PC-9 (cell line): ENCODE measurements at regions of chr10 and their contacts with region 1.

Region 1: DNA sequence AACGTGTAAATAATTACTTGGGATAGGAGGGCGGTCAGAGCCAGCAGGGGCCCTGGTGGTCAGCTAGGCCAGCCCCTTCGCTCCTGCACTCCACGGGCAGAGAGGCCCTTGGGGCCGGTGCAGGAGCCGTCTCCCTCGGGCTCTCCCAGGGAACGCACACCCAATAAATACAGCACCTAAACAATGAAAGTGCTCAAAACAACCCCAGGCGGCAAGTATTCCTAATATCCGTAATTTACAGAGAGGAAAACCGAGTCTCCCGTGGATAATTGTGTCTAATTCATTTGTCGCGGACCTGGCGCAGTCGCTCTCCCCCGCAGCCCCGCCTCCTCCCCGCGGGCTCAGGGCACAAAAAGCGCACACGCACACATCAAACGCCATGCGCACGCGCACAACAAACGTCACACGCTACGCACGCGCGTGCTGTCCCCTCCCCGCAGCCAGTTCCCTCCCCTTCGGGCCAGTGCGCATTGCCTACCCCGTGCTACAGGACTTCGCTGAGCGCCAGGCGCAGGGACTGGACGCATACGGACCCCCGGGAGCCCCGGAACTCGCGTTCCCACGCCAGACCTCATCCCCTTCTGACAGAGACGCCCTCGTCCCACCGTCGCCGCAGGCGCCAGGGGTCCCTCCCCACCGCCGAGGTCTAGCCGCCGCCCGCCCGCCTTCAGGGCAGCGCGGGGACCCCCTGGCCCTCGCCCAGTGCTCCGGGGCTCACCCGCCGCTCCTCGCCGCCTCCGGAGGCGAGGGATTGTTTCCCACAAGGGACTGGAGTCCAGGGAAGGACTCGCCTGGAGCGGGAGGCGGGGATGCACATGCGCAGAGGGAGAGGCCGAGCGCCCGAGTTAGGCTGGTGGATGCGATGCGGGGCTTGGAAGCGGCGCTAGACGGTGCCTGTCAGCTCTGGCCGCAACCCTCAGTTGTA is at the start of gene ZNF248:
- DNase-seq: peak; percentile 83 to 91
- H3K4me3 ChIP-seq: peak within 1 kb of the TSS; percentile 94
- H3K27ac ChIP-seq: peak within 1 kb of the TSS; percentile 92
- H3K4me1 ChIP-seq: peaks cover 27% of the 10 kb centered on the region
- H3K27me3 ChIP-seq: no peaks in the 10 kb centered on the region
- CTCF ChIP-seq: no peak
- total RNA-seq, gene ZNF248: 10.7 and 15.1 TPM in 2 replicates

Region 2: DNA sequence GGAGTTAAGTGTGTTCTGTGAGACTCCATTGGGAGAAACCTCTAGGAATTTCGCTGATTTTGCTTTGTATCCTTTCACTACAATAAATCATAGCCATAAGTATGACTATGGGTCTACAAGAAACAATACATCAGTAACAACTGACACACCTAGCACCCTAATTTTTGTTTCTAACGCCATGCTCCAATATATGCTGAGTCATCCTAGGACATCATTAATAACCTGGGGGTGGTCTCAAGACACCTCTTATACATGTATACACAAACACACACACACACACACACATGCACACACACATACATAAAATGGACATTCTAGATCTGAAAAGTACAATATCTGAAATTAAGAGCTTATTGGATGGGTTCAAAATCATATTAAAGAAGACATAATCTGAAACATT is 18.3 kb before region 1 on chr10:
- CTCF ChIA-PET with region 1: interaction called, 6 read pairs
- POLR2A ChIA-PET with region 1: interaction called, 15 read pairs
- intact Hi-C with region 1: no loop called
- DNase-seq: no peak
- H3K4me3 ChIP-seq: no peak overlapping the region
- H3K27ac ChIP-seq: no peak overlapping the region
- H3K4me1 ChIP-seq: no peaks in the 10 kb centered on the region
- H3K27me3 ChIP-seq: no peaks in the 10 kb centered on the region
- CTCF ChIP-seq: no peak

Region 3: DNA sequence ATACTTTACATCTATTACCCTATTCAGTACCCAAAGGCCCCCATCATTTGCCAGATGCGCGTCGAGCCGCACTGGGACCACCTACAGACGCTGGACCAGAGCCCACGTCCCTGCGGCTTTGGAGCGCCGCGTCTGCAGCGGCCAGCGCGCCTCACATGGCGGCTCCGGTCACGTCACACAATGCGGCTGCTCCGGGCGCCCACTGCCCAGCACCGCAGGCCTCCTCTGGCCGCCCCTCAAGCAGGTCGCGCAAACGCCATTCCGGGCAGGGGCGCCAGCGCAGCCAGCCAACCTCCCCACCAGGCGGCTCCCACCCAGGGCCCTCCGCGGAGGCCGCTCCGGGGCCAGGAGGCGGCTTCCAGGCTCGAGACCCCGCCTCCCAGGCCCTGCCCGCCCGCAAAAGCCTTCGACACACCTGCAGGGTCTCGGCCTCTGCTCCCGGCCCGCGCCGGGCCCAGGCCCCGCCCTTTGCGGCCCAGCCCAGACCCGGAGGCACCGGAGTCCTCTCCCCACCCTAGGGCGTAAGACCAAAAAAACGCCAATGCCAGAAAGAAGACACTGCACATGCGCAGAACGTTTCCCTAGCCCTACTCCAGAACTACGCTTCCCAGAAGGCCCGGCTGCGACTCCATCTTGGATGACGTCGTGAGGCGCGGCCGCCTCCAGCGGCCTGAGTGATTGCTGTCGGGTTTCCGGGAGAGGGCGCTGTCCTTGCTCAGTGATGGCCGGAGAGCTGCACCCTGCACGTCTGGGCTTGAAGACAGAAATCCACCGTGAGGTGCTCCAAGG is 118.7 kb after region 1 on chr10 and contains the start of gene ZNF25:
- CTCF ChIA-PET with region 1: no interaction called
- POLR2A ChIA-PET with region 1: no interaction called
- intact Hi-C with region 1: loop called (anchors 5 kb)
- DNase-seq: peak; percentile 93 to 96
- H3K4me3 ChIP-seq: peak within 1 kb of the TSS; percentile 67
- H3K27ac ChIP-seq: 0 out of 2 replicates have a peak within 1 kb of the TSS, but pooled peaks have one; percentile 31
- H3K4me1 ChIP-seq: no peaks in the 10 kb centered on the region; the same call in 1 of the 2 replicates
- H3K27me3 ChIP-seq: no peaks in the 10 kb centered on the region
- CTCF ChIP-seq: peak; percentile 80
- total RNA-seq, gene ZNF25: 2.6 and 2.7 TPM in 2 replicates

Region 4: DNA sequence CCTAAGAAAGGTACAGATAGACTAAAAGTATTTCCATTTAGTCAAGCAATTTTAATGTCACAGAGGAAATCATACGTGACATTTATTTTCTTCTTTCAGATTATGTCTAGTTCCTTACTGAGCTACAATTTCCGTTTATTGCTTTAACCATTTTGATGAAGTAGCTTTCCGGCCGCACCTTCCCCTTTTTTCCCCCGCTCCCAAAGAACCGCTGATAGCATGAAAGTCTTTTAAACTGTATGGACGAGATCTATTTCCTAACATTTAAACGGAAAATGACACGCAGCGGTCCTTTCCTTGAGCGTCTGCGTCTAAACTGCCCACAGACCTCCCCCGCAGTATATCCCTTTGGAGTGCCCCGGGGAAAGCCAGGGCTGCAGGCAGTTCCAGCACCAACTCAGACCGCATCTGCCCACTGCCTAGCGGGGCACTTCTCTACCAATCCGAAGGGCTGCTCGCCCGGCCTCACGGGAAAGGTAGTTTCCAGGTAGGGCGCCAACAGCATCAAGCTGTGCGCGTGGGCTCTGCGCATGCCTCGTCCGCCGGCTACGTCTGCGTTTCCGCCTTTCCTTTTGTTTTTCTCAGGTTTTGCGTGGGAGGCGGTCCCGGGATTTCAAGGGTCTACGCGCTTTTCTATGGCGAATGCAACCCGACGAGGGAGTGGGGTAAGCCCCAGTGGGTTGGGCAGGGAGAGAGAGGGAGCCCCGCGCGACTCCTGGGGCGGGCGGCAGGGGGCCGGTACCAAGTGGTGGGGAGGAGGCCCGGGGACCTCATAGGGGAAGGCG is 152.8 kb after region 1 on chr10 and contains the start of gene ZNF33A:
- CTCF ChIA-PET with region 1: no interaction called
- POLR2A ChIA-PET with region 1: no interaction called
- intact Hi-C with region 1: loop called (anchors 5 kb)
- DNase-seq: peak; percentile 75 to 87
- H3K4me3 ChIP-seq: peak within 1 kb of the TSS; percentile 86
- H3K27ac ChIP-seq: peak within 1 kb of the TSS; percentile 93
- H3K4me1 ChIP-seq: peaks cover 5% of the 10 kb centered on the region
- H3K27me3 ChIP-seq: no peaks in the 10 kb centered on the region
- CTCF ChIP-seq: no peak
- total RNA-seq, gene ZNF33A: 19.5 and 27.5 TPM in 2 replicates

Region 5: GRCh38 chr10:38038107-38038931 is 180.8 kb after region 1 on chr10:
- CTCF ChIA-PET with region 1: no interaction called
- POLR2A ChIA-PET with region 1: no interaction called
- intact Hi-C with region 1: no loop called
- DNase-seq: no peak
- H3K4me3 ChIP-seq: no peak overlapping the region
- H3K27ac ChIP-seq: no peak overlapping the region
- H3K4me1 ChIP-seq: no peaks in the 10 kb centered on the region
- H3K27me3 ChIP-seq: no peaks in the 10 kb centered on the region
- CTCF ChIP-seq: no peak